Activated naive CD4-positive, alpha-beta T cell treated with anti-CD3 and anti-CD28 coated beads for 36 hours (primary cell): ENCODE measurements at regions of chr15 and their contacts with region 1.

Region 1: DNA sequence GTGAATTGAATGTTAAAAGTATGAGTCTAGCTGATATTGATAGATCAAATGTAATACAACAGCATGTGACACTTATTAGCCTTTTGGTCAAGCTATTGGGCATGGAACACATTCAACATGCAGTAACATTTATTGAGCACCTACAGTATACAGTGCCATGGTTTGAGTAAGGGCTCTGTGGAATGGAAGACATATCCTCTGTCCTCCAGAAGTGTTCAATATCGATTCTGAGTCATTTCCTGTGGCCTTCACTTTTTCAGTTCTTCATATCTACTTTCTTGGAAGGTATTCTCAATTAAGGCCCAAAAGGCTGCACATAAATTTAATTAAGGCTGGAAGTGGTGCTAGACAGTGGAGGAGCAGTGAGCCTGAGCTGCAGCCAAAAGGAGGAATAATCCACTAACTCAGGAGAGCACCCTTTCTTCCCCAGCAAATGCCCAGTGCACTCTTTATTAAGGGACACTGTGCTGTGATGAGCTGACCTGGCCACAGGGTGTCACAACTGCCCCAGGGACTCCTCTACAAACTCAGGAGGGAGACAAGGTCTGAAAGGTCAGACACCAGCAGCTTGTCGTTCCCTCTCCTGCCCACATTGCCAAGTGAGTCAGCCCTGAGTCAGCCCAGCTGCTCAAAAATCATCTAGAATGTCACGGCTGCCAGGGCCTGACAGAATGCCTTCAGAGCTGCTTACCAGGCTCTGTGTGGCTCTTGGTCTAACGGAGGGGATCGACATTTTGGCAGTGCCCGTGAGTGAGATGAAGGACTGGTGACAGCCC is 544.8 kb downstream of the AGBL1 start:
- DNase-seq: peak; percentile 88
- H3K4me3 Mint-ChIP-seq: no peak overlapping the region
- H3K27ac Mint-ChIP-seq: no peak overlapping the region
- H3K4me1 Mint-ChIP-seq: peaks cover 19% of the 10 kb centered on the region
- H3K27me3 Mint-ChIP-seq: no peaks in the 10 kb centered on the region

Region 2: DNA sequence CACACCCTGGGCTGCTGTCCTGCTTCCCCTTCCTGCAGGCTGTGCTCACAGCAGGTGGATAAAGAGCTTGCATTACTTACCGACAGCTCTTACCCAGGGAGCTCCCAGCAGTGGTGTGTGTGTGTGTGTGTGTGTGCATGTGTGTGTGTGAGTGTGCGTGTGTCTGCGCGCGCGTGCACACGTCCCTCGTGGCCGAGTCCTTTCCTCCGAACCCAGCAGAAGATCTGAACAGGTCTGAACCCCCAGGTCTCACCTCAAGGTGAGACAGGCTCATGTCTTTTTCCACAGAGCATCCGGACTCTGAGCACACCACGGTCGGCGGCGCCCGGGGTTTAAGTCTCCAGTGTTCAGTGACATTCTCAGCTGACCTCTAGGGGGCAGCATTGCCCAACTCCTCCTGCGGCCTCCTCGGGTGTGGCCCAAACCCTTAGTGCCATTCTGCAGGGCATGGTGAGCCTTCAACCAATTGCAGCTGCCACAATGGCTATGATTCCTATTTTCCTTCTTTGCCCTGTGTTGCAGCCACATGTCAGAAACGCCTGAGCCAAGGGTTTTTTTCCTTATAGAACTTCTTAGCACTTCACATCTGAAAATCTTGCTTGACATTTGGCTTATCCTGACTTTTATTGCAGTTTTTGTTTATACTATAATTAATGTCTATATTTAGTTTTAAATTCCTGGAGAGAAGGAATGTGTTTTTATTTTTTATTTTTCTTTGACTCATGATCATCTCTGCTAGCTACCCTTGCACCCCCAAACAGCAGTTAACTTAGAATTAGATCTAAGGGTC is 765.7 kb before region 1 on chr15:
- CTCF ChIA-PET with region 1: no interaction called
- intact Hi-C with region 1: loop called (anchors 2 kb)
- DNase-seq: peak; percentile 87
- H3K4me3 Mint-ChIP-seq: peak overlapping the region; percentile 67
- H3K27ac Mint-ChIP-seq: no peak overlapping the region
- H3K4me1 Mint-ChIP-seq: peaks cover 2% of the 10 kb centered on the region
- H3K27me3 Mint-ChIP-seq: peaks cover 13% of the 10 kb centered on the region

Region 3: DNA sequence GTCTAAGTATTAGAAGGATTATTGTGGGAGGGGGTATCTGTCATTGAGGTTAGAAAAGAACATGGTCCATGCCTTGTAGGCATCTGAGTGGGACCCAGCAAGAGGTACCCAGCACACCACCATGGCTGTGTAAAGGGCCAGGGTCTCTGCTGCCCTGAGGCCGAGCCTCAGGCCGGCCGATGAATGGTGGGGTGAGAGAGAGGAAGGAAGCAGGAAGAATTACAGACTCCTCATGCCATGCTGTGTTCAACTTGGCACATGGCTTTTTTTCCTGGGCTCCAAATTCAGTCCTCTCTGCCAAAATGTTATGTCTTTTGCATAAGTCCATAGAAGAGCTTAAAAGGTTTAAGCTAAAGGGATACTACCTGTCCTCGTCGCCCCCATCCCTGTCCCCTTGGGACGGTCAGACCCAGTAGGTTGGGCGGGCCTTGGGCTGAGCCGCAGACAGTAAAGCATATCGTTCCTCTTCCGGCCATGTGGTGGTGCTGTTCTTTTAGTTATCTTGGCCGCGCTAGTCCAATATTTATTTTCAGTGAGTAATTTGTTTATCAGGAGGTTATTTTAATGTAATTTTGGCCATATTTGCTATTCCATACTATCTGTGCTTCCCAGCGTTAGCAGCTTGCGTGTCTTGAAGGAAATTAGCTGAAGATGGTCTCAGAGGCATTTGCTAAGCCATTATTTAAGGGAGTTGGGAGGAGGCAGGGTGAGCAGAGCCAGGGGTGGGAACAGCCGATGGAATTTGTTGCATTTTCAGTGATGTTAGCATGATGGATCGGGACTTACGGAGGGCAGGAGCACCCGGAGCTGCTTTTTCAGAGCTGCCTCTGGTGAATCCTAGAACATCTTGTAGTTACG is 392.4 kb before region 1 on chr15:
- CTCF ChIA-PET with region 1: interaction called, 3 read pairs
- intact Hi-C with region 1: loop called (anchors 10 kb)
- DNase-seq: peak; percentile 49
- H3K4me3 Mint-ChIP-seq: no peak overlapping the region
- H3K27ac Mint-ChIP-seq: no peak overlapping the region
- H3K4me1 Mint-ChIP-seq: peaks cover 4% of the 10 kb centered on the region
- H3K27me3 Mint-ChIP-seq: peaks cover 30% of the 10 kb centered on the region

Region 4: DNA sequence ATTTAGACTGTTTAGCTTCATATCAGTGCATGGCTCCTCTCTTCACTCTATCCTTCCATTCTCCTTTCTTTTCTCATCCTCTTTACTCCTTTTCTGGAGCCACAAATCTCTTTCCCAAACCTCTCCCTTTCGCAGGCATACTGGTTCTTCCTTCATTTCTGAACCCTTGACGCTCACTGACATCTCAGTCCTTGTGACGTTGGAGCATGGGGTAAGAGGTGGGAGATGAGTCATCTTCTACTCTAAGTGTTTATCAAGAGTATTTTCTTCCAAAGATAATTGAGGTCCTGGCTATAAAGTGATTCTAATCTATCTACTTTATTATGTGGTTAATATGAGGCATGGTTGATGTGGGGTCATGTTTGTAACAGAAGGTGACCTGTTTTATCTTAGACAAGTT is 130.6 kb before region 1 on chr15:
- CTCF ChIA-PET with region 1: no interaction called
- intact Hi-C with region 1: no loop called
- DNase-seq: no peak
- H3K4me3 Mint-ChIP-seq: no peak overlapping the region
- H3K27ac Mint-ChIP-seq: no peak overlapping the region
- H3K4me1 Mint-ChIP-seq: no peaks in the 10 kb centered on the region
- H3K27me3 Mint-ChIP-seq: no peaks in the 10 kb centered on the region

Region 5: GRCh38 chr15:86603466-86603865 is 21.0 kb before region 1 on chr15:
- CTCF ChIA-PET with region 1: no interaction called
- intact Hi-C with region 1: no loop called
- DNase-seq: no peak
- H3K4me3 Mint-ChIP-seq: no peak overlapping the region
- H3K27ac Mint-ChIP-seq: no peak overlapping the region
- H3K4me1 Mint-ChIP-seq: no peaks in the 10 kb centered on the region
- H3K27me3 Mint-ChIP-seq: peaks cover 3% of the 10 kb centered on the region

Region 6: DNA sequence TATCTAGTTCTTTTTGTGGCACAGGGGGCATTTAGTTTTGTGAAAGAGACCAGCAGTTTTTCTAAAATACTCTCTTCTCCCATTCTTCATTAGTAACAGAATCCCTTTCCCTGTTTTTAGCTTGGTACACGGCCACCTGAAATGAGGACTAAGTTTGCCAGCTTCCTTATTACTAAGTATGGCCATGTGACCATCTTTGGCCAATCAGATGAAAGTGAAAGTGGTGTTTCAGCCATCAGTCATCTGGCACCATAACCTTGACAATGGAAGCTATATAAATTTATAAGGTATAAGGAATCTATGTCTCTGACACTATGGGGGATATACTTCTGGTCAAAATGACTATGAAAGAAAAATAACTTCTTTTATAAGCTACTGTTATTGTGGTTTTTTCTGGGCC is 25.6 kb after region 1 on chr15:
- CTCF ChIA-PET with region 1: interaction called, 8 read pairs
- intact Hi-C with region 1: loop called (anchors 2 kb)
- DNase-seq: peak; percentile 14
- H3K4me3 Mint-ChIP-seq: no peak overlapping the region
- H3K27ac Mint-ChIP-seq: no peak overlapping the region
- H3K4me1 Mint-ChIP-seq: peaks cover 50% of the 10 kb centered on the region
- H3K27me3 Mint-ChIP-seq: no peaks in the 10 kb centered on the region

Region 7: GRCh38 chr15:86743283-86743903 is 118.9 kb after region 1 on chr15:
- CTCF ChIA-PET with region 1: interaction called, 33 read pairs
- intact Hi-C with region 1: loop called (anchors 1 kb)
- DNase-seq: peak; percentile 62
- H3K4me3 Mint-ChIP-seq: no peak overlapping the region
- H3K27ac Mint-ChIP-seq: no peak overlapping the region
- H3K4me1 Mint-ChIP-seq: no peaks in the 10 kb centered on the region
- H3K27me3 Mint-ChIP-seq: no peaks in the 10 kb centered on the region

Region 8: DNA sequence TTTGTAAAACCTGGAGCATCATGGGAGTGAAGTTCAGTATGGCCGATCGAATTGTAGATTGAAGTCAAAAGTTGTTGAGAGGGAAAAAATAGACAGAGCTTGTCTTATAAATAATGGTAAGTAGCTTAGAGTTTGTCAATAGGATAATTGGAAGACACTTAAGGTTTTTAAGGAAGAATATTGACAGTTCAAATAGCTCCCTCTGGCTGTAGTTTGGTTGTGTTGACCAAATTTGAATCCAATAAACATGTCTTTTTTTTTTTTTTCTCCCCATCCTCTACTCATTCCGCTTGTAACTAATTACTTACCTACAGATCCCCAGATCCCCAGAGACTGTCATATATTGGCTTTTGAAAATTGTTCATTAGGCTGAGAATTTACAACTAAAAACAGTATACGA is 132.2 kb after region 1 on chr15:
- CTCF ChIA-PET with region 1: no interaction called
- intact Hi-C with region 1: loop called (anchors 5 kb)
- DNase-seq: no peak
- H3K4me3 Mint-ChIP-seq: no peak overlapping the region
- H3K27ac Mint-ChIP-seq: no peak overlapping the region
- H3K4me1 Mint-ChIP-seq: no peaks in the 10 kb centered on the region
- H3K27me3 Mint-ChIP-seq: peaks cover 15% of the 10 kb centered on the region

Region 9: GRCh38 chr15:86929461-86929860 is 305.0 kb after region 1 on chr15:
- CTCF ChIA-PET with region 1: no interaction called
- intact Hi-C with region 1: no loop called
- DNase-seq: no peak
- H3K4me3 Mint-ChIP-seq: no peak overlapping the region
- H3K27ac Mint-ChIP-seq: no peak overlapping the region
- H3K4me1 Mint-ChIP-seq: no peaks in the 10 kb centered on the region
- H3K27me3 Mint-ChIP-seq: peaks cover 2% of the 10 kb centered on the region

Region 10: GRCh38 chr15:87604857-87605446 is 980.5 kb after region 1 on chr15:
- CTCF ChIA-PET with region 1: no interaction called
- intact Hi-C with region 1: loop called (anchors 2 kb)
- DNase-seq: peak; percentile 25
- H3K4me3 Mint-ChIP-seq: no peak overlapping the region
- H3K27ac Mint-ChIP-seq: no peak overlapping the region
- H3K4me1 Mint-ChIP-seq: no peaks in the 10 kb centered on the region
- H3K27me3 Mint-ChIP-seq: no peaks in the 10 kb centered on the region